Naive thymus-derived CD4-positive, alpha-beta T cell (primary cell): ENCODE measurements at regions of chr7 and their contacts with region 1.

Region 1: GRCh38 chr7:149261829-149262617 is at the start of gene ZNF783:
- DNase-seq: peak; percentile 77 to 88 (median 86)
- ATAC-seq: peak; percentile 97
- H3K4me3 ChIP-seq: peak within 1 kb of the TSS; percentile 74
- H3K4me3 Mint-ChIP-seq: peak within 1 kb of the TSS; percentile 83 to 91 (median 88)
- H3K27ac ChIP-seq: peak within 1 kb of the TSS; percentile 71
- H3K27ac Mint-ChIP-seq: peak within 1 kb of the TSS; percentile 84 to 93 (median 90)
- H3K4me1 ChIP-seq: peaks cover 19 to 20% of the 10 kb centered on the region in 2 donors
- H3K4me1 Mint-ChIP-seq: peaks cover 22 to 46% (median 32%) of the 10 kb centered on the region in 7 donors
- H3K27me3 ChIP-seq: no peaks in the 10 kb centered on the region
- H3K27me3 Mint-ChIP-seq: no peaks in the 10 kb centered on the region
- total RNA-seq, gene ZNF783: 23.3 to 49.2 (median 36.0) TPM

Region 2: DNA sequence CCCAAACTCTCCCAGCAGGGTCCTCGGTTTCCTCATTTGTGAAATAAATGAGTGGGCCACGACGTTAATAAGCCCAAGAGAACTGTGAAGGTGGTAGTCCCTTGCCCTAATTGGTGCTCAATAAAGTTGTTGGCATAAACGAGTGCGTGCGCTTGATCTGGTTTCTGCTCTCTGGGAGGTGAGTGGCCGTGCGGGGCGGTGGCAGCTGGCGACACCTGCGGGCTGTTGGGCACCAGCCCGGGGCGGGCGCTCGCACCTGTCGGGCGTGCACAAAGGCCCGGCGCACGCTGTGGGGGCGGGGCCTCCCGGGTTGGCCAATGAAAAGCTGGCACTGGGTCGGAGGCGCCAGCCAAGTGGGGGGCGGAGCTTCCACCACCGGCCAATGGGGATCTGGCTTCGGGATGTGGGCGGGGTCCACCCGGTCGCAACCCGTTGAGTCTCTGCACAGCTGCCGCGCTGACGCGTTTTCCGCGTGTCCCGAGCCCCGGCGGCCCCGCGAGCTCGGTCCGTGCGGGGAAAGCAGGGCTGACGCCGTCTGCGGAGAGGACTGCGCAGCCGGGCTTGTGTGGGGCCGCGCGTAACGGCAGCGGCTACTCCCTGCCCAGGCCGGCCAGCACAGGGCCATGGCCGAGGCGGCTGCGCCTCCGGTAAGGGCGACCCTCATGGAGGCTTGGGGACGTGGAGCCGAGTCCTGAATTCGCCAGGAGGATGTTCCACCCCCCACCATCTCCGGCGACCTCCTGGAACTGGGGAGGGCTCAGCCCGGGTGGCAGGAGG is 23.0 kb after region 1 on chr7:
- CTCF ChIA-PET with region 1: interaction called, 26 read pairs
- POLR2A ChIA-PET with region 1: interaction called, 61 read pairs
- intact Hi-C with region 1: loop called (anchors 1 kb)
- DNase-seq: peak; percentile 96 to 99 (median 98)
- ATAC-seq: peak; percentile 98
- H3K4me3 ChIP-seq: peak overlapping the region; percentile 80
- H3K4me3 Mint-ChIP-seq: peak overlapping the region; percentile 79 to 97 (median 92)
- H3K27ac ChIP-seq: peak overlapping the region; percentile 72
- H3K27ac Mint-ChIP-seq: peak overlapping the region; percentile 76 to 96 (median 93)
- H3K4me1 ChIP-seq: peaks cover 30 to 36% of the 10 kb centered on the region in 2 donors
- H3K4me1 Mint-ChIP-seq: peaks cover 26 to 55% (median 46%) of the 10 kb centered on the region in 7 donors
- H3K27me3 ChIP-seq: no peaks in the 10 kb centered on the region
- H3K27me3 Mint-ChIP-seq: no peaks in the 10 kb centered on the region

Region 3: GRCh38 chr7:149321978-149322541 is 60.0 kb after region 1 on chr7:
- CTCF ChIA-PET with region 1: no interaction called
- POLR2A ChIA-PET with region 1: interaction called, 3 read pairs
- intact Hi-C with region 1: loop called in 1 of 2 experiments (anchors 2 kb)
- DNase-seq: peak in 2 of 9 donors; percentile 6
- ATAC-seq: no peak
- H3K4me3 ChIP-seq: peak overlapping the region; percentile 15
- H3K4me3 Mint-ChIP-seq: peak overlapping the region; percentile 1 to 74 (median 70)
- H3K27ac ChIP-seq: no peak overlapping the region
- H3K27ac Mint-ChIP-seq: peak overlapping the region in 6 of 9 donors; percentile 7 to 86 (median 64)
- H3K4me1 ChIP-seq: no peaks in the 10 kb centered on the region
- H3K4me1 Mint-ChIP-seq: peaks cover 7 to 29% (median 19%) of the 10 kb centered on the region in 7 donors
- H3K27me3 ChIP-seq: no peaks in the 10 kb centered on the region
- H3K27me3 Mint-ChIP-seq: peaks cover 7 to 12% (median 9%) of the 10 kb centered on the region in 5 donors

Region 4: GRCh38 chr7:149333321-149333717 is 71.3 kb after region 1 on chr7:
- CTCF ChIA-PET with region 1: no interaction called
- POLR2A ChIA-PET with region 1: no interaction called
- intact Hi-C with region 1: no loop called
- DNase-seq: no peak
- ATAC-seq: no peak
- H3K4me3 ChIP-seq: no peak overlapping the region
- H3K4me3 Mint-ChIP-seq: no peak overlapping the region
- H3K27ac ChIP-seq: no peak overlapping the region
- H3K27ac Mint-ChIP-seq: no peak overlapping the region
- H3K4me1 ChIP-seq: no peaks in the 10 kb centered on the region
- H3K4me1 Mint-ChIP-seq: peaks cover 0 to 1% (median 0%) of the 10 kb centered on the region in 7 donors
- H3K27me3 ChIP-seq: no peaks in the 10 kb centered on the region
- H3K27me3 Mint-ChIP-seq: peaks cover 0 to 24% (median 8%) of the 10 kb centered on the region in 5 donors

Region 5: DNA sequence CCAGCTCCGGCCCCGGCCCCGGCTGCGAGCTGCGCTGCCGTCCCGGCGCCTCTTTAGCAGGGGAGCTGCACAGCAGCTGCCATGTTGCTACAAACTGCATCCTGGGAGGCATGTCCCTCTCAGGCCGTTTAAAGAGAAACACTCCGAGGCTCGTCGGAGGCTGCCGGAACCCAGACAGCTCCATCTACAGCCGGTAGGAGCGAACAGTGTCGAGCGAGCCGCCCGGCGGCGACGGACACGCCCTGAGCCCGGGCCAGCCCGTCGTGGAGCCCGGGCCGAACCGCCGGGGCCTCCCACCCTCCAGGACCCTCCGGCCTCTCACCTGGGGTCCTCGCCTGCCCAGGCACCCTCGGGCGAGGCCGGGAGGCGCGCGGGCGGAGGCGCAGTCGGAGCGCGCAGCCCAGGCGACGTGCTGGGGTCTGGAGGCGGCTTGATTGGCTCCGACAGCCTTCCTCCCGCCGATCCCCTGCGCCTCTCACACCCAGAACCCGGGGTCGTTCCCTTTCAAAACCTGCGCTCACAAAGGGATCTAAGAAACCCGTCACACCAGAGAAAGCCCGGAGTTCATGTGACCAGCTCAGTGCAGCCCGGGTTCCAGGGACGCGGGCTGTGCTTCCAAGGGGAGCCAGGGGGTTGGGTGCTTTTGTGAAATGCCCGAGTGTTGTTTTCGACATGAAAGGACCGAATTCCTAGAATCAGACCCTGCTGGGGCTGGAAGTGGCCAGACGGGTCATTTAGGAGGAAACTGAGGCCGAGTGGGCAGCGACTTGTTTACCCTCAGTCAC is 198.7 kb after region 1 on chr7 and contains the start of gene ZNF777:
- CTCF ChIA-PET with region 1: interaction called, 5 read pairs
- POLR2A ChIA-PET with region 1: interaction called, 8 read pairs
- intact Hi-C with region 1: loop called (anchors 1 kb)
- DNase-seq: peak; percentile 65 to 84 (median 80)
- ATAC-seq: peak; percentile 99
- H3K4me3 ChIP-seq: peak within 1 kb of the TSS; percentile 80
- H3K4me3 Mint-ChIP-seq: peak within 1 kb of the TSS; percentile 78 to 91 (median 87)
- H3K27ac ChIP-seq: peak within 1 kb of the TSS; percentile 72
- H3K27ac Mint-ChIP-seq: peak within 1 kb of the TSS; percentile 28 to 89 (median 76)
- H3K4me1 ChIP-seq: peaks cover 4 to 16% of the 10 kb centered on the region in 2 donors
- H3K4me1 Mint-ChIP-seq: peaks cover 13 to 46% (median 35%) of the 10 kb centered on the region in 7 donors
- H3K27me3 ChIP-seq: no peaks in the 10 kb centered on the region
- H3K27me3 Mint-ChIP-seq: peaks cover 4 to 29% (median 10%) of the 10 kb centered on the region in 5 donors
- total RNA-seq, gene ZNF777: 11.2 to 16.1 (median 14.3) TPM

Region 6: DNA sequence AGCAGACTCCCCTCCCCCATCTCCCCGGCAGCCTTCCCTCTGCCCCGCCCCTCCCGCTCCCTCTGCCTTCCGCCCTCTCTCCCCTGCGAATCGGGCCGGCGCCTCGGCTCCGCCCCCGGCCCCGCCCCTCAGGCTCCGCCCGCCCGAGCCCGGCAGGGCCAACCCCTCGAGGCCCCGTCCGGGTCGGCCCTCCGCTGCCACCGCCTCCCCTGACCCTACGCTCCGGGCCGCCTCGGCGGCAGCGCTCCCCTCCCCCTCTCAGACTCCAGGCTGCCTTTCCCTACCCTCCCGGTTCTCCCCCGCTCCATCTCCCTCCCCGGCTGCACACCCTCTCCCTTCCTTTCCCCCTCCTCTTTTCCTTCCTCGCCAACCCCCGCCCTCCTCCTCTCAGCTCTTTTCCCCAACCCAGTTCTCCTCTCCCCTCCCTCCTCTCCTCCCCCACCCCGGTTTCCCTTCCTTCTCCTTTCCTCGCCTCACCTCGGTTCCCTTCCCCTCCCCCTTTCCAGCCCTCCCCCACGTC is 509.8 kb after region 1 on chr7:
- CTCF ChIA-PET with region 1: no interaction called
- POLR2A ChIA-PET with region 1: no interaction called
- intact Hi-C with region 1: loop called in 1 of 2 experiments (anchors 5 kb)
- DNase-seq: peak; percentile 74 to 89 (median 85)
- ATAC-seq: peak; percentile 94
- H3K4me3 ChIP-seq: peak overlapping the region; percentile 72
- H3K4me3 Mint-ChIP-seq: peak overlapping the region; percentile 16 to 88 (median 78)
- H3K27ac ChIP-seq: peak overlapping the region; percentile 71
- H3K27ac Mint-ChIP-seq: peak overlapping the region in 6 of 9 donors; percentile 10 to 70 (median 42)
- H3K4me1 ChIP-seq: peaks cover 5 to 8% of the 10 kb centered on the region in 2 donors
- H3K4me1 Mint-ChIP-seq: peaks cover 2 to 29% (median 21%) of the 10 kb centered on the region in 7 donors
- H3K27me3 ChIP-seq: no peaks in the 10 kb centered on the region
- H3K27me3 Mint-ChIP-seq: peaks cover 0 to 46% (median 0%) of the 10 kb centered on the region in 5 donors